SK-N-SH (cell line): ENCODE measurements at regions of chr1 and their contacts with region 1.

Region 1: GRCh38 chr1:205396967-205397616 is 24.8 kb downstream of the LEMD1 start:
- DNase-seq: peak; percentile 75
- H3K4me3 ChIP-seq: peak overlapping the region in 1 of 2 experiments; percentile 38; a peak in 1 of 4 replicates
- H3K27ac ChIP-seq: no peak overlapping the region
- H3K4me1 ChIP-seq: no peaks in the 10 kb centered on the region
- H3K27me3 ChIP-seq: no peaks in the 10 kb centered on the region; the same call in 1 of the 2 replicates
- CTCF ChIP-seq: peak; percentile 65
- EP300 ChIP-seq: no peak
- RAD21 ChIP-seq: peak; percentile 94

Region 2: GRCh38 chr1:205354259-205354904 is 42.7 kb before region 1 on chr1:
- CTCF ChIA-PET with region 1: interaction called, 17 read pairs
- POLR2A ChIA-PET with region 1: no interaction called
- DNase-seq: peak; percentile 56
- H3K4me3 ChIP-seq: no peak overlapping the region
- H3K27ac ChIP-seq: no peak overlapping the region
- H3K4me1 ChIP-seq: peaks cover 0 to 8% of the 10 kb centered on the region in 2 experiments; a peak in 1 of 4 replicates
- H3K27me3 ChIP-seq: no peaks in the 10 kb centered on the region; the same call in 1 of the 2 replicates
- CTCF ChIP-seq: peak; percentile 96
- EP300 ChIP-seq: no peak
- RAD21 ChIP-seq: peak; percentile 67

Region 3: GRCh38 chr1:205410581-205411298 is 13.6 kb after region 1 on chr1:
- CTCF ChIA-PET with region 1: interaction called, 15 read pairs
- POLR2A ChIA-PET with region 1: no interaction called
- DNase-seq: no peak
- H3K4me3 ChIP-seq: no peak overlapping the region
- H3K27ac ChIP-seq: no peak overlapping the region
- H3K4me1 ChIP-seq: no peaks in the 10 kb centered on the region
- H3K27me3 ChIP-seq: peaks cover 7% of the 10 kb centered on the region; the same call in 1 of the 2 replicates
- CTCF ChIP-seq: no peak
- EP300 ChIP-seq: no peak
- RAD21 ChIP-seq: no peak

Region 4: GRCh38 chr1:205440476-205441317 is 43.6 kb after region 1 on chr1:
- CTCF ChIA-PET with region 1: interaction called, 11 read pairs
- POLR2A ChIA-PET with region 1: no interaction called
- DNase-seq: no peak
- H3K4me3 ChIP-seq: no peak overlapping the region
- H3K27ac ChIP-seq: no peak overlapping the region
- H3K4me1 ChIP-seq: peaks cover 3 to 5% of the 10 kb centered on the region in 2 experiments; a peak in 2 of 4 replicates
- H3K27me3 ChIP-seq: peaks cover 40% of the 10 kb centered on the region; the same call in 1 of the 2 replicates
- CTCF ChIP-seq: no peak
- EP300 ChIP-seq: no peak
- RAD21 ChIP-seq: no peak

Region 5: DNA sequence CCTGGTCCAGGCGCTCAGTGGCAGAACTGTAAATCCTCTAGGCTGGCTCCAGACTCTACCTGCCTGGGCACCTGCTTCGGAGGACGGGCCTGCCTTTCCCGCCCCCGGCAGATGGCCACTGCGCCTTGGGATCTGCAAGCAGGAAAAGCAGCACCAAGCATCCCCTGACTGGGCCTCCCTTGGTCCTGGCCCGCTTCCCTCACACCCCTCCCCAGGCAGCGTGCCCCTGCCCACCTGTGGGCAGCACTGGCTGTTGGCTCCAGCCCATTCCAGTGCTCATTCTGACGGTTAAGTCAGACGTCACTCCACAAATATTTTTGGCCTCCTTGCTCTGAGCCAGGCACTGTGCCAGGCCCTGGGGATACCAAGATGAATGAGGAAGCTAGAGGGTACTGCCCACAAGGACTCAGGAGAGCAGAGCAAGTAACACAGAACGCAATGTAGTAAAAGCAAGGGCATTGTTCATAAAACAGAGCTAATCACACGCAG is 80.7 kb after region 1 on chr1:
- CTCF ChIA-PET with region 1: interaction called, 190 read pairs
- POLR2A ChIA-PET with region 1: no interaction called
- DNase-seq: no peak
- H3K4me3 ChIP-seq: no peak overlapping the region
- H3K27ac ChIP-seq: no peak overlapping the region
- H3K4me1 ChIP-seq: peaks cover 5 to 8% of the 10 kb centered on the region in 2 experiments; a peak in 2 of 4 replicates
- H3K27me3 ChIP-seq: peaks cover 14% of the 10 kb centered on the region; the same call in 1 of the 2 replicates
- CTCF ChIP-seq: no peak
- EP300 ChIP-seq: peak in 1 of 2 experiments; percentile 51; a peak in 1 of 4 replicates
- RAD21 ChIP-seq: no peak

Region 6: DNA sequence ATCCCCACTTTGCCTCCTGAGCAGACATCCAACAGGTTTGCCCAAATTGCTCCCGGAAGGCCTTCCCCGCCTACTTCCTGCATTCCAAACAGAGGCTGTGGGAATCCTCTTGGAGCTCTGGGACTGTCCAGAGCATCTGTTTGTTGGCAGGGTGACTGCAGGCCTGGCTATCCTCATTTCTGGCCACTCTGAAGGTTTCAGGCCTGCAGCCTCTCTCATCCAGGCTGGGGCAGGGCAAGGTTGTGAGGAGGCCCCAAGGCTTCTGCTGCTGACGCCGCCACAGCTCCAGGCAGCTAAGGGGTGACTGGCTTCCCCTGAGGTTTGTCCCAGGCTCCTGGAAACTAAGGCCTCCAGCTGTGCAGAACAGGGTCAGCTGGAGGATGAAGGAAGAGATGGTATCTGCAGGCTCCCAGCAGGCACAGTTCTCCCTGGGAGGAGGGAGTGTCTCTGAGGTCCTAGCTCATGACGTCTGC is 118.7 kb after region 1 on chr1:
- CTCF ChIA-PET with region 1: interaction called, 13 read pairs
- POLR2A ChIA-PET with region 1: no interaction called
- DNase-seq: peak; percentile 82
- H3K4me3 ChIP-seq: no peak overlapping the region
- H3K27ac ChIP-seq: peak overlapping the region in 1 of 2 experiments; percentile 76; a peak in 2 of 4 replicates
- H3K4me1 ChIP-seq: peaks cover 6 to 49% of the 10 kb centered on the region in 2 experiments; a peak in 2 of 4 replicates
- H3K27me3 ChIP-seq: no peaks in the 10 kb centered on the region
- CTCF ChIP-seq: no peak
- EP300 ChIP-seq: 0 out of 4 replicates have a peak, but pooled peaks of 1 of the 2 experiments have one; percentile 74
- RAD21 ChIP-seq: no peak; the same call in 1 of the 2 replicates

Region 7: GRCh38 chr1:205650241-205650640 is 253.1 kb after region 1 on chr1:
- CTCF ChIA-PET with region 1: no interaction called
- POLR2A ChIA-PET with region 1: no interaction called
- DNase-seq: no peak
- H3K4me3 ChIP-seq: no peak overlapping the region
- H3K27ac ChIP-seq: no peak overlapping the region
- H3K4me1 ChIP-seq: no peaks in the 10 kb centered on the region; a peak in 1 of 4 replicates
- H3K27me3 ChIP-seq: no peaks in the 10 kb centered on the region
- CTCF ChIP-seq: no peak
- EP300 ChIP-seq: no peak
- RAD21 ChIP-seq: no peak